ENCODE measurements at regions of chr5 and their contacts with region 1.

Region 1: DNA sequence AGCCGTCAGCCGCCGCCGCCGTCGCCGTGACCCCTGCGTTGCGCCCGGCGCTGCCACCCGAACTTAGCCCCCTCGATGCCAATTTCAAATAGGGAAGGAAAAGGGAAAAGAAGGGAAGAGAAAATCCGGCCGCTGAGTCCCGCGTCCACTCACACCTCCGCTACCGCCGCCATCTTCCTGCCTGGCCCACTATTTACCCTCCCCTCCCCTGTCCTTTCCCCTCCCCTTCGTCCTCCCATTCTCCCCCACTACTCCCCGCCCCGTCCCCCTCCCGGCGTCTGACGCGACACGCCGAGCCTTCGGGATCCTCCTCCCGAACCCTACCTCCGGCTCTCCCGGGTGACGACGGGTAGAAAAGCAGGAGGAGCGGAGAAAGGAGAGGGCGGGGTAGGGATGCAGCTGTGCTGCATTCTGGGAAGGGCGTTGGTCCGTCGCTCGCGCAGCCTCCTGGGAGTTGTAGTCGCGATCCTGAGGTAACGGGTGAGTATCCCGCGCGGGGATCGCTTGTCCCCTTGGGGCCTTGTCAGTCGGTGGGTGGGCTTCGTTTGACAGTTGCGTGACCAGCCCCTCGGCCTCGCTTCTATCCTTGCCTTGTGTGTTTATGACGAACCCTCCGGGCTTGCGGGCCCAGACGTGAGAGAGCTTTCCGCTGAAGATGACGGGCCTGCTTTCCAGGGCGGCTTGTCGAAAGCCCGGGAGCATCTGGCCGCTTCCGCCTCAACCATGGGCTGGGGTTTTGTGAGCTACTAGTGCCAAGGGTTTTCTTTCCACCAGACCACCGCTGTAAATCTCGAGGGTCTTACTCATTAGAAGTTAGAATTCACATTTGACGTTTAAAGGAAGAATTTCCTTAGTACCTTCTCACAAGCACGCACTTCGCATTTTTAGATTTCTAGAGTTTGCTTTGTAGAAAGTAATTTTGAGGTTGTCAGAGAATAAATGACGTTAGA is at the starts of genes CERT1 and POLK:
- DNase-seq: peak; percentile 98 to 99
- ATAC-seq: peak; percentile 95 to 97 (median 96)
- H3K4me3 ChIP-seq: peak within 1 kb of the TSS; percentile 86
- H3K27ac ChIP-seq: peak within 1 kb of the TSS; percentile 96
- H3K4me1 ChIP-seq: peaks cover 51% of the 10 kb centered on the region
- H3K27me3 ChIP-seq: no peaks in the 10 kb centered on the region
- CTCF ChIP-seq: no peak
- total RNA-seq, gene CERT1: 33.3 to 54.8 (median 49.6) TPM
- total RNA-seq, gene POLK: 18.9 to 29.9 (median 26.7) TPM

Region 2: GRCh38 chr5:75551471-75551870 is 39.8 kb after region 1 on chr5:
- intact Hi-C with region 1: no loop called
- DNase-seq: no peak
- ATAC-seq: no peak
- H3K4me3 ChIP-seq: no peak overlapping the region
- H3K27ac ChIP-seq: no peak overlapping the region
- H3K4me1 ChIP-seq: no peaks in the 10 kb centered on the region
- H3K27me3 ChIP-seq: no peaks in the 10 kb centered on the region
- CTCF ChIP-seq: no peak

Region 3: GRCh38 chr5:75566710-75567309 is 55.1 kb after region 1 on chr5:
- intact Hi-C with region 1: loop called in 1 of 2 experiments (anchors 2 kb)
- DNase-seq: no peak
- ATAC-seq: peak; percentile 76 to 99 (median 92)
- H3K4me3 ChIP-seq: no peak overlapping the region
- H3K27ac ChIP-seq: peak overlapping the region; percentile 44
- H3K4me1 ChIP-seq: peaks cover 12% of the 10 kb centered on the region
- H3K27me3 ChIP-seq: no peaks in the 10 kb centered on the region
- CTCF ChIP-seq: no peak

Measured in psoas muscle (tissue), 8 donors.